Right cardiac atrium (tissue), 5 donors: ENCODE measurements at regions of chr15 and their contacts with region 1.

Region 1: DNA sequence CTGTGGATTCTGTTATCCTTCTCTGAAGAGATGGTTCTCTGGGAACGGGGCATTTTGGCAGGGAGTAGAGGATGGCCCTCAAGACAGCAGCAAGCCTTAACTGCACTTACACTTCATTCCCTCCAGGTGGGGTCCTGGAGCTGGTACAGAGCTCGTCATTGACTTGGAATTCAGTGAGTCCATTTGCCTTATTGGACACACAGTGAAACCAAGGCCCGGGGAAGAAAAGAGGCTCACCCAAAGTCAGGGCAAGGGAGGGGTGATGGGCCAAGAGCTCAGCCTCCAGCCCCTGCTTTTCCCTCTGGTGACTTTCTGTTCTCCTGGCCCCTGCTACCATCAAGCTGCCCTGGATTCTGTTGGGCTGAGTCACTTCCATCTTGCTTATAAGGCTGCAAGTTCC is 125.6 kb downstream of the ETFA start:
- DNase-seq: no peak
- ATAC-seq: peak in 1 of 2 donors; percentile 22
- H3K4me3 ChIP-seq: no peak overlapping the region
- H3K27ac ChIP-seq: no peak overlapping the region
- H3K4me1 ChIP-seq: no peaks in the 10 kb centered on the region
- H3K27me3 ChIP-seq: no peaks in the 10 kb centered on the region

Region 2: GRCh38 chr15:76135516-76135915 is 50.2 kb before region 1 on chr15:
- intact Hi-C with region 1: no loop called
- DNase-seq: no peak
- ATAC-seq: no peak
- H3K4me3 ChIP-seq: no peak overlapping the region
- H3K27ac ChIP-seq: no peak overlapping the region
- H3K4me1 ChIP-seq: peaks cover 1% of the 10 kb centered on the region
- H3K27me3 ChIP-seq: no peaks in the 10 kb centered on the region

Region 3: GRCh38 chr15:76330080-76330680 is 144.5 kb after region 1 on chr15:
- intact Hi-C with region 1: loop called in 2 of 4 experiments (anchors 5 kb)
- DNase-seq: peak; percentile 62 to 80 (median 75)
- ATAC-seq: peak; percentile 80 to 85
- H3K4me3 ChIP-seq: no peak overlapping the region
- H3K27ac ChIP-seq: no peak overlapping the region
- H3K4me1 ChIP-seq: peaks cover 2% of the 10 kb centered on the region
- H3K27me3 ChIP-seq: no peaks in the 10 kb centered on the region